K562 (cell line): ENCODE measurements at regions of chr1 and their contacts with region 1.

Region 1: GRCh38 chr1:44049839-44050238 is 18.6 kb upstream of the SLC6A9 start:
- DNase-seq: no peak
- ATAC-seq: no peak
- H3K4me3 ChIP-seq: no peak overlapping the region
- H3K27ac ChIP-seq: no peak overlapping the region
- H3K4me1 ChIP-seq: peaks cover 10 to 30% of the 10 kb centered on the region in 2 experiments; a peak in 4 of 5 replicates
- H3K27me3 ChIP-seq: no peaks in the 10 kb centered on the region
- CTCF ChIP-seq: no peak
- EP300 ChIP-seq: no peak
- POLR2A ChIP-seq: no peak
- RAD21 ChIP-seq: no peak

Region 2: DNA sequence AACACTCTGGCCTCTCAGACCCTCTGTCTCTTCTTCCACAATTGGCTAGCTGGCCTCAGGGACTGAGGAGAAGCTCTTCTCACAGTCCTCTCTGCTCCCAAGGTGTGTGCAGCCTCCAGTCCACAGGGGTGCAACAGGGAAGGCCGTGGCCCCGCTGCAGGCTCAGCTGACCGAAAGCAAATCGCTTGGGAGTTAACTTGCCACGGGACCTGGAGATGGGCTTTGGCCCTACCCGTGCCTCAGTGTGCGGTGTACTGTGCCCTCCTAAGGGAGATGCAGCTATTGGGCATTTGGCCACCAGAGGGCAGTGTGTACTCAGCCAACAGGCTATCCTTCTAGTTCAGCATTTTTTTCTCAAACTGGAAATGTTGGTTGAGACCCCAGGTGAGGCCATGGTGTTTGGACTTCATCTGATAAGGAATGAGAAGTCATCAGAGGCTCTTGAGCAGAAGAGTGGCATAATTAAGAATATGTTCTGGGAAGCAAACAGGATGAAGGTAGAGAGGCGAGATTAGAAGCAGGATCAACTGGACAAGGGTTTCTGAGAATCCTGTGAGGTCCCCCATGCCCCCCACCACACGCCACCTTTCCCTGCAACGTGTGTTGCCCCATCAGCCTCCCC is 822.6 kb before region 1 on chr1:
- CTCF ChIA-PET with region 1: no interaction called
- POLR2A ChIA-PET with region 1: no interaction called
- in situ Hi-C with region 1: no loop called
- intact Hi-C with region 1: loop called (anchors 5 kb)
- DNase-seq: peak; percentile 82 to 88 (median 87)
- ATAC-seq: peak; percentile 97
- H3K4me3 ChIP-seq: no peak overlapping the region
- H3K27ac ChIP-seq: no peak overlapping the region
- H3K4me1 ChIP-seq: 0 out of 5 replicates have a peak, but pooled peaks cover 0 to 3% of the 10 kb centered on the region in 2 experiments
- H3K27me3 ChIP-seq: peaks cover 12 to 55% of the 10 kb centered on the region in 2 experiments
- CTCF ChIP-seq: peak; percentile 90 to 98 (median 96)
- EP300 ChIP-seq: no peak
- POLR2A ChIP-seq: no peak
- RAD21 ChIP-seq: peak; percentile 95 to 98

Region 3: DNA sequence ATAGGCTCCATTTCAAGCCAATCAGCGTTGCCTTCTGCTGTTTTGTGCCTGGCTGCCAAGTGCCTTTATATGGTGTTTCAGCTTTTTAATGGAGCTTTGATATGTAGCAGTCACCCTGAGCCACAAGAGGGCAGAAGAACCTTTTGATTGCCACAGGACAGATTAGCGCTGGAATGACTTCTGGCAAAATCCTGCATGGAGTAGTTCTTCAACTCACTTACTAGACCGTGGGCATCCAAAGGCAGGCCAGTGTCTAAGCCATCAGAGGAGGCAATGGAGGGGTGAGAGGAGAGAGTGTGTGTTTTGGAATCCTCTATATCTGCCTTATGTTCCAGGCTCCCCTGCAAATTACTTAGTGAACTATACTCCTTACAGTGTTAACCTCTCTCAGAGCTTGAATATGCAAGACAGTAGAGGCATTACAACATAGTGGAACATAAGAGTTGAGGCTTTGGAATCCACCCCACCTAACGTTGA is 286.3 kb before region 1 on chr1:
- CTCF ChIA-PET with region 1: interaction called, 5 read pairs
- POLR2A ChIA-PET with region 1: no interaction called
- in situ Hi-C with region 1: no loop called
- intact Hi-C with region 1: loop called (anchors 2 kb)
- DNase-seq: peak; percentile 58 to 84 (median 66)
- ATAC-seq: peak; percentile 95
- H3K4me3 ChIP-seq: no peak overlapping the region
- H3K27ac ChIP-seq: no peak overlapping the region
- H3K4me1 ChIP-seq: peaks cover 7 to 26% of the 10 kb centered on the region in 2 experiments; a peak in 3 of 5 replicates
- H3K27me3 ChIP-seq: no peaks in the 10 kb centered on the region
- CTCF ChIP-seq: peak; percentile 92 to 98 (median 92)
- EP300 ChIP-seq: no peak
- POLR2A ChIP-seq: no peak
- RAD21 ChIP-seq: peak; percentile 98

Region 4: GRCh38 chr1:43991476-43992231 is 58.2 kb before region 1 on chr1 and contains the start of gene CCDC24:
- CTCF ChIA-PET with region 1: interaction called, 9 read pairs
- POLR2A ChIA-PET with region 1: interaction called, 16 read pairs
- in situ Hi-C with region 1: no loop called
- intact Hi-C with region 1: loop called (anchors 2 kb)
- DNase-seq: peak; percentile 89 to 94 (median 92)
- ATAC-seq: peak; percentile 81
- H3K4me3 ChIP-seq: peak within 1 kb of the TSS; percentile 74
- H3K27ac ChIP-seq: peak within 1 kb of the TSS; percentile 51
- H3K4me1 ChIP-seq: peaks cover 15 to 44% of the 10 kb centered on the region in 2 experiments; a peak in 4 of 5 replicates
- H3K27me3 ChIP-seq: no peaks in the 10 kb centered on the region
- CTCF ChIP-seq: peak in 1 of 3 experiments; percentile 13; a peak in 1 of 6 replicates
- EP300 ChIP-seq: no peak
- POLR2A ChIP-seq: peak; percentile 82
- RAD21 ChIP-seq: peak in 1 of 2 experiments; percentile 9; a peak in 2 of 4 replicates
- polyA plus RNA-seq, gene CCDC24: 0.31 to 0.64 TPM

Region 5: GRCh38 chr1:44029906-44030604 is 19.8 kb before region 1 on chr1:
- CTCF ChIA-PET with region 1: no interaction called
- POLR2A ChIA-PET with region 1: interaction called, 13 read pairs
- in situ Hi-C with region 1: no loop called
- intact Hi-C with region 1: no loop called
- DNase-seq: peak; percentile 95 to 96 (median 96)
- ATAC-seq: peak; percentile 85
- H3K4me3 ChIP-seq: peak overlapping the region; percentile 82
- H3K27ac ChIP-seq: peak overlapping the region; percentile 84
- H3K4me1 ChIP-seq: peaks cover 43 to 61% of the 10 kb centered on the region in 2 experiments
- H3K27me3 ChIP-seq: no peaks in the 10 kb centered on the region
- CTCF ChIP-seq: no peak
- EP300 ChIP-seq: peak; percentile 63
- POLR2A ChIP-seq: peak; percentile 61
- RAD21 ChIP-seq: no peak